ENCODE measurements at regions of chr20 and their contacts with region 1.

Region 1: GRCh38 chr20:34302723-34303528 is at the start of gene AHCY:
- DNase-seq: peak; percentile 98
- H3K4me3 ChIP-seq: peak within 1 kb of the TSS; percentile 68 to 95 (median 90)
- H3K27ac ChIP-seq: peak within 1 kb of the TSS; percentile 83
- H3K4me1 ChIP-seq: peaks cover 30% of the 10 kb centered on the region
- H3K27me3 ChIP-seq: no peaks in the 10 kb centered on the region
- CTCF ChIP-seq: no peak
- total RNA-seq, gene AHCY: 258 to 274 TPM

Region 2: GRCh38 chr20:34516247-34517113 is 213.6 kb after region 1 on chr20 and contains the start of gene DYNLRB1:
- CTCF ChIA-PET with region 1: no interaction called
- dilution Hi-C with region 1: no loop called
- in situ Hi-C with region 1: loop called in 1 of 2 experiments (anchors 25 kb)
- intact Hi-C with region 1: loop called (anchors 1 kb)
- DNase-seq: peak; percentile 91
- H3K4me3 ChIP-seq: peak within 1 kb of the TSS; percentile 63 to 89 (median 85)
- H3K27ac ChIP-seq: peak within 1 kb of the TSS; percentile 73
- H3K4me1 ChIP-seq: peaks cover 20% of the 10 kb centered on the region
- H3K27me3 ChIP-seq: no peaks in the 10 kb centered on the region
- CTCF ChIP-seq: no peak
- total RNA-seq, gene DYNLRB1: 55.5 to 95.6 TPM

Region 3: DNA sequence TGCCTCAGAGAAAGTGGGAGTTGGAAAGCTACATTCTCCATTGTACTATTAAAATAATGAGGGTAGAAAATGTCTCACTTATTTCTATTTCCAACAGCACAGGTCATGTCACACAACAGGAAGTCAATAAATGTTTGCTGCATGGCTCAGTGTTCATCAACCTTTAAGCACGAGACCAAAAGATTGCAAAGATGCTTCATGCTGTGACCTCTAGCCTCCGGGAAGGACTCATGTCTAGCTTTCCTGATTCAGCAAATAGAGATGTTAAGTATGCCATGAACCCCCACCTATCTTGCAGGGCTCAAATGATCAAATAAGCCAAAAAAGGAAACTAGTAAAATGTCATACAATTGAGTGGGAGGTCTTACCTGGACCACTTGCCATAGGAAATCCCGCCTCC is 465.2 kb after region 1 on chr20:
- CTCF ChIA-PET with region 1: interaction called, 10 read pairs
- dilution Hi-C with region 1: no loop called
- in situ Hi-C with region 1: no loop called
- intact Hi-C with region 1: no loop called
- DNase-seq: no peak
- H3K4me3 ChIP-seq: no peak overlapping the region
- H3K27ac ChIP-seq: no peak overlapping the region
- H3K4me1 ChIP-seq: no peaks in the 10 kb centered on the region
- H3K27me3 ChIP-seq: no peaks in the 10 kb centered on the region
- CTCF ChIP-seq: no peak